Activated CD4-positive, alpha-beta memory T cell treated with anti-CD3 and anti-CD28 coated beads, Interleukin-2, amount 10 ng/mL, durations not matched to agents 7 days and 5 days (primary cell): ENCODE measurements at regions of chr11 and their contacts with region 1.

Region 1: GRCh38 chr11:77630157-77630710 is 7.4 kb downstream of the CLNS1A start:
- DNase-seq: no peak
- H3K4me3 Mint-ChIP-seq: peak overlapping the region; percentile 28
- H3K27ac Mint-ChIP-seq: no peak overlapping the region
- H3K4me1 Mint-ChIP-seq: peaks cover 35% of the 10 kb centered on the region
- H3K27me3 Mint-ChIP-seq: no peaks in the 10 kb centered on the region

Region 2: DNA sequence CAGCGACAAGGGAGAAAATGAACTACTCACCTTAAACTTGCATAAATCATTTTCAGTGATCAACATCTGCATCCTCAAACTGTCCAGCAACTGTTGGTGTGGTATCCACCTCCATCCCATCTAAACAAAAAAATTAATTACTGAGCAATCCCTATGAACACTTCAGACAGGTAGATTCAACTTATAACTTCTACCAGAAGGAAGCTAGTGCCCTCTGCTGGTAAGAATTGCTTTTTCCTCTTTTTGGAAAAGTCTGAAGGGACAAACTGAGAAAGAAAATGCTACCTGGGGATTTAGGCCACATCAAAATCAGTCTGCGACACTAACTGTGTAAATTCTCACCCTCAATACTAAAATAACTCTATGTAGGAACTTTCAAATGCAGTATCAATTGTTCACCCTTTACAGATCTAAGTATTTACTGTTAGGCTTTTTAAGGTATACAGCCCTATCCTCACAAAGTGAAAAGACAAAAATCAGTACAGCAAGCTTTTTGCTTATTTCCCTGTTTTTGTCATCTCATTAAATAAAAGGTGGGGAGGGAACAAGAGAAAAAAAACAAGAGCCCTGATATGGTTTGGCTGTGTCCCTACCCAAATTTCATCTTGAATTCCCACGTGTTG is 10.5 kb before region 1 on chr11:
- CTCF ChIA-PET with region 1: interaction called, 12 read pairs
- POLR2A ChIA-PET with region 1: no interaction called
- DNase-seq: no peak
- H3K4me3 Mint-ChIP-seq: no peak overlapping the region
- H3K27ac Mint-ChIP-seq: no peak overlapping the region
- H3K4me1 Mint-ChIP-seq: no peaks in the 10 kb centered on the region
- H3K27me3 Mint-ChIP-seq: no peaks in the 10 kb centered on the region